ENCODE measurements at regions of chr4 and their contacts with region 1.

Region 1: GRCh38 chr4:24488399-24489164 is 95.8 kb downstream of the DHX15 start:
- DNase-seq: peak; percentile 33
- H3K4me3 ChIP-seq: no peak overlapping the region
- H3K27ac ChIP-seq: no peak overlapping the region
- H3K4me1 ChIP-seq: no peaks in the 10 kb centered on the region
- H3K27me3 ChIP-seq: no peaks in the 10 kb centered on the region
- CTCF ChIP-seq: peak; percentile 89 to 98

Region 2: GRCh38 chr4:24321151-24321550 is 167.4 kb before region 1 on chr4:
- CTCF ChIA-PET with region 1: no interaction called
- dilution Hi-C with region 1: no loop called
- in situ Hi-C with region 1: no loop called
- intact Hi-C with region 1: no loop called
- DNase-seq: no peak
- H3K4me3 ChIP-seq: no peak overlapping the region
- H3K27ac ChIP-seq: no peak overlapping the region
- H3K4me1 ChIP-seq: no peaks in the 10 kb centered on the region
- H3K27me3 ChIP-seq: no peaks in the 10 kb centered on the region
- CTCF ChIP-seq: no peak

Region 3: GRCh38 chr4:24686871-24687680 is 198.5 kb after region 1 on chr4:
- CTCF ChIA-PET with region 1: no interaction called
- dilution Hi-C with region 1: no loop called
- in situ Hi-C with region 1: no loop called
- intact Hi-C with region 1: loop called (anchors 1 kb)
- DNase-seq: no peak
- H3K4me3 ChIP-seq: no peak overlapping the region
- H3K27ac ChIP-seq: no peak overlapping the region
- H3K4me1 ChIP-seq: no peaks in the 10 kb centered on the region
- H3K27me3 ChIP-seq: peaks cover 2% of the 10 kb centered on the region
- CTCF ChIP-seq: peak; percentile 37 to 42

Region 4: DNA sequence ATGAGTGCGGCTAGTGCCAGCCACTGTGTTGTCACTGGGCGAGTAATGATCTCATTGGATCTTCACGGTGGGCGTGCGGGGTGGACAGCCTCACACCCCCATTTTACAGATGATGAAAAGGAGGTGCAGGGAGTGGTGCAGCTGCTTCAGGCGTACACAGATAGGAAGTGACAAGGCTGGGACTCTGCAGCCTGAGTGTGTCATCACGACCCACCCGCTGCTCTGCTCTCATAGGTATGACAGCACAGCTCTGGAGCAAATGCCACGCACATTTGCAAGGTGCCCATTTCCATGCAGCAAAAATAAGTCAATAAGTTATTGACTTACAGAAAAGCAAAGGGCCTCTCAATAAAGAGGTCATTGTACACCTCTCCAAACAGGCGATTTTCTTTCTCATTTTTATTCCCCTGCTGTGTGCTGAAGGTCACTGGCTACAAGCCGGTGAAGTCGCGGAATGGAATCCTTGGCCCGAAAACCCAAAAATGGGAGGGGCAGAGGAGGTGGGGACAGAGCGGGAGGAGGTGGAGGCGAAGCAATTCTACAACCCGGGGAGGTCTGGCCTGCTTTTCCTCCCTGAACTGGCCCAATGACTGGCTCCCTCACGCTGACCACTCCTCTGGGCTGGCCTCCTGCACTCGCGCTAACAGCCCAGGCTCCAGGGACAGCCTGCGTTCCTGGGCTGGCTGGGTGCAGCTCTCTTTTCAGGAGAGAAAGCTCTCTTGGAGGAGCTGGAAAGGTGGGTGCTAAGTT is 306.5 kb after region 1 on chr4 and contains the start of gene SOD3:
- CTCF ChIA-PET with region 1: no interaction called
- dilution Hi-C with region 1: no loop called
- in situ Hi-C with region 1: no loop called
- intact Hi-C with region 1: loop called (anchors 1 kb)
- DNase-seq: no peak
- H3K4me3 ChIP-seq: no peak within 1 kb of the TSS
- H3K27ac ChIP-seq: no peak within 1 kb of the TSS
- H3K4me1 ChIP-seq: no peaks in the 10 kb centered on the region
- H3K27me3 ChIP-seq: peaks cover 8% of the 10 kb centered on the region
- CTCF ChIP-seq: no peak
- total RNA-seq, gene SOD3: 0.17 TPM in 1 of 2 donors, not detected in the other

Region 5: GRCh38 chr4:24885342-24885741 is 396.8 kb after region 1 on chr4:
- CTCF ChIA-PET with region 1: no interaction called
- dilution Hi-C with region 1: loop called (anchors 10 kb)
- in situ Hi-C with region 1: no loop called
- intact Hi-C with region 1: no loop called
- DNase-seq: no peak
- H3K4me3 ChIP-seq: no peak overlapping the region
- H3K27ac ChIP-seq: no peak overlapping the region
- H3K4me1 ChIP-seq: no peaks in the 10 kb centered on the region
- H3K27me3 ChIP-seq: peaks cover 1% of the 10 kb centered on the region
- CTCF ChIP-seq: no peak

Region 6: GRCh38 chr4:24980064-24980690 is 491.6 kb after region 1 on chr4:
- CTCF ChIA-PET with region 1: no interaction called
- dilution Hi-C with region 1: no loop called
- in situ Hi-C with region 1: loop called (anchors 5 to 10 kb)
- intact Hi-C with region 1: loop called (anchors 2 kb)
- DNase-seq: peak; percentile 49
- H3K4me3 ChIP-seq: no peak overlapping the region
- H3K27ac ChIP-seq: no peak overlapping the region
- H3K4me1 ChIP-seq: no peaks in the 10 kb centered on the region
- H3K27me3 ChIP-seq: peaks cover 2% of the 10 kb centered on the region
- CTCF ChIP-seq: peak; percentile 74 to 90

Region 7: DNA sequence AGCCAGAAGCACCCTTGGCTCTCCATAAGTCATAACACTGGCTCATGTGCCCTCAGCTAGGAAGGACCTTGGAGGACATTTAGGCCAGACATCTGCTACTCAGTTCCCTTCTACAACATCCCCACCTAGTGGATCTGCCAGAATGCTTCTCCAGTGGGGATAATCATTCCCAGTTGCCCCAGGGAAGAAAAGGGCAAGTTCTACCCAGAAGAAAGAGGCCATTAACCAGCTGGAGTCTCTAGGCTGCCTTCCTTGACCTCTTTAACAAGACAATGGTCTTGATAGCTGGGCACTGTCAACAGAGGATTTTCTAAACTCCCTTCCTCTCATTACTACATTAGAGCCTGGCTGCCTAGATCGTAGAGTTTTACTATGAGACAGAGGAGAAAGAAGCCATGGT is 500.2 kb after region 1 on chr4:
- CTCF ChIA-PET with region 1: no interaction called
- dilution Hi-C with region 1: no loop called
- in situ Hi-C with region 1: loop called (anchors 5 to 10 kb)
- intact Hi-C with region 1: loop called (anchors 1 kb)
- DNase-seq: peak; percentile 26
- H3K4me3 ChIP-seq: no peak overlapping the region
- H3K27ac ChIP-seq: no peak overlapping the region
- H3K4me1 ChIP-seq: no peaks in the 10 kb centered on the region
- H3K27me3 ChIP-seq: no peaks in the 10 kb centered on the region
- CTCF ChIP-seq: peak; percentile 45 to 68

Region 8: DNA sequence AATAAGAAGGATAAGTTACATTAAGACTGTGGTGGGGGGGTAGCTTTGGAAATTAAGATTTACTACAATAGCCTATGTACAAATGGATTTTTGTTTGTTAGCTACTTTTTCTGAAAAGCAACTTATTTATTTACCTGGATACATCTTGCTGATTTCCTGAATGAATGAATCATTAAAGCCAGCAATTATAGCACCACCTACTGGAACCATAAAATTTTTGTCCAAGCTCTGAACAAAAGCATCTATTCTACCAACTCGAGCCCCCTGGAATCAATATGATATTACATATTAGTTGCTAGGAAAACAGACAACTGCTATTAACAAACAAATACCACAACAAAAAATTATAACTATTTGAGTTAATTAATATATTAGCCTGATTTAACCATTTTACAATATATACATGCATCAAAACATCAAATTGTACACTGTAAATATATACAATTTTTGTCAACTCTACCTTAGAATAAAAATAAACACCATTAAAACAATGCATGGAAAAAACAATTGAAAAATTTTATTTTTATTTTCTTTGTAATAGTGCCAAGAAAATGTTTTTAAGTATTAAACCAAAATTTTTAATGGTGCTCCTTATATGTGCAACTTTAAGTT is 656.4 kb after region 1 on chr4:
- CTCF ChIA-PET with region 1: no interaction called
- dilution Hi-C with region 1: no loop called
- in situ Hi-C with region 1: no loop called
- intact Hi-C with region 1: loop called (anchors 10 kb)
- DNase-seq: no peak
- H3K4me3 ChIP-seq: no peak overlapping the region
- H3K27ac ChIP-seq: no peak overlapping the region
- H3K4me1 ChIP-seq: no peaks in the 10 kb centered on the region
- H3K27me3 ChIP-seq: no peaks in the 10 kb centered on the region
- CTCF ChIP-seq: peak; percentile 54 to 67